Activated CD8-positive, alpha-beta T cell treated with anti-CD3 and anti-CD28 coated beads for 36 hours (primary cell): ENCODE measurements at regions of chr2 and their contacts with region 1.

Region 1: DNA sequence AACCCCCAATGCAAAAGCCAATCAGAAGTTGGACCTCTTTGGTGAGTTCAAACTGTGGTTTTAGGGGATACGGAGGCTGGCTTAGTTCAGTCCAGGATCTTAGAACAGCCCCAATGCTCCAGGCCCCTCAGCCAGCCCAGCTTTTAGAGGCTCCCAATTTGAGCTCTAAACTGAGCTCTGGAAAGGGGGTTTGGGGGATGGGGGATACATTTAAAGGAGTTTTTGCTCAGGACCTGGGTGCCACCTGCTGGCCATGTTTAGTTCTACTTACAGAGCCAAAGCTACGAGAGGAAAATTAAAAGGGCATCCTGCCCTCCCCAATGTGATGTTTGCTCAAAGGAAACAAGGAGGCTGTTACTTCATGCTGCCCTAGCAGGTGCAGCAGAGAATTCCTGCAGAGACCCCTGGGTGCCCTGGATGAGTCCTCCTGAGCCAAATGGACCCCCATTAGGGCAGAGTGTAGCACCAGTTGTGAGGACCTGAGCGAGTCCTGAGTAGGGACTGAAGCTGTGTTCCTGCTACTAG is 15.9 kb upstream of the TMEM214 start:
- DNase-seq: peak; percentile 75
- ATAC-seq: peak; percentile 77
- H3K4me3 Mint-ChIP-seq: no peak overlapping the region
- H3K27ac Mint-ChIP-seq: no peak overlapping the region
- H3K4me1 Mint-ChIP-seq: peaks cover 2% of the 10 kb centered on the region
- H3K27me3 Mint-ChIP-seq: no peaks in the 10 kb centered on the region
- CTCF ChIP-seq: peak; percentile 63

Region 2: DNA sequence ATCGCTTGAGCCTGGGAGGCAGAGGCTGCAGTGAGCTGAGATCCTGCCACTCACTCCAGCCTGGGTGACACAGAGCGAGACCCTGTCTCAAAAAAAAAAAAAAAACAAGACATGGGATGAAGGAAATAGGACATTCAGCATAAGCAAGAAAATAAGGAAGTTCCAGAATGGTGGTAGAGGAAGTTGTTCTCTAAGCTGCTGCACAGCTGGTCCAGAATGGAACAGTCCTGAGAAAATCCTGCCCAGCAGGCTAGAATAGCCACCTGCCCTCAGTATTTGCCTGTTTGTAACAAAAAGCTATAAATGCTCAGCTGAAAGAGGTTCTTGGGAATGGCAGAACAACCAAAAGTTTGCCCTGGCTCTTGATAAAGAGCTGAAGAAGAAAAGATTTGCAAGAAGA is 57.5 kb before region 1 on chr2:
- CTCF ChIA-PET with region 1: interaction called, 183 read pairs
- POLR2A ChIA-PET with region 1: interaction called, 5 read pairs
- intact Hi-C with region 1: loop called (anchors 2 kb)
- DNase-seq: no peak
- ATAC-seq: no peak
- H3K4me3 Mint-ChIP-seq: no peak overlapping the region
- H3K27ac Mint-ChIP-seq: no peak overlapping the region
- H3K4me1 Mint-ChIP-seq: no peaks in the 10 kb centered on the region
- H3K27me3 Mint-ChIP-seq: peaks cover 18% of the 10 kb centered on the region
- CTCF ChIP-seq: no peak

Region 3: GRCh38 chr2:26970244-26970920 is 46.5 kb before region 1 on chr2 and contains the start of gene MAPRE3:
- CTCF ChIA-PET with region 1: interaction called, 183 read pairs
- POLR2A ChIA-PET with region 1: no interaction called
- intact Hi-C with region 1: no loop called
- DNase-seq: peak; percentile 79
- ATAC-seq: peak; percentile 91
- H3K4me3 Mint-ChIP-seq: peak within 1 kb of the TSS; percentile 74
- H3K27ac Mint-ChIP-seq: no peak within 1 kb of the TSS
- H3K4me1 Mint-ChIP-seq: peaks cover 16% of the 10 kb centered on the region
- H3K27me3 Mint-ChIP-seq: peaks cover 16% of the 10 kb centered on the region
- CTCF ChIP-seq: no peak
- total RNA-seq, gene MAPRE3: 1.6 to 1.7 TPM

Region 4: DNA sequence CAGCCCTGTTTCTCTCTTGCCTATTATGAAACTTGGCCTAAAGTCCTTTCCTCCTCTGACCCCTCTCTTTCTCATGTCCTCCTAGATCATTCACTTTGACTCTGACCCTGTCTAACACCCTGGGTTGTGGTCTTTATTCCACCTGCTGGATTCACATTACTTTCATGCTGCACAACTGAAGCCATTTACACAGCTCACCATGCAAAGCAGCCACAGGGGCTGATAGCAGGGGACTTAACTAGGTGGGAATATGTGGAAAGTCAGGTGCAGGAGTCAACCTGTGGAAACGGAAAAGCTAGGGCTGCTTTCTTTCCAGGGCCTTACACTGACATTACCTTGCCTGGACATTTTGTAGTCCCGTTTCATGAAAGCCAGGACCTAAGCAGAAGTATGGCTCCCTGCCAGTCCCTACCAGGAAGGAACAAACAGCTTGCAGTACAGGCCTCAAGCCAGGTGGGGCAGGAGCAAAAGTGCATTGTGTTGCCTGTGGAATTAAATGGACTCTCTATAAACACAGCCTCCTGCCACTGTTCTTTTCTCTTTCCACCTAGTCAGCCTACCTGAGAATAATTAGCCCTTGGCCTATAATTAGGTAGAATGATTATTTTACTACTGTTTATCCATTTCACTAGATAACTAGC is 34.6 kb before region 1 on chr2:
- CTCF ChIA-PET with region 1: interaction called, 8 read pairs
- POLR2A ChIA-PET with region 1: no interaction called
- intact Hi-C with region 1: loop called (anchors 5 kb)
- DNase-seq: peak; percentile 42
- ATAC-seq: peak; percentile 76
- H3K4me3 Mint-ChIP-seq: no peak overlapping the region
- H3K27ac Mint-ChIP-seq: no peak overlapping the region
- H3K4me1 Mint-ChIP-seq: no peaks in the 10 kb centered on the region
- H3K27me3 Mint-ChIP-seq: no peaks in the 10 kb centered on the region
- CTCF ChIP-seq: no peak

Region 5: DNA sequence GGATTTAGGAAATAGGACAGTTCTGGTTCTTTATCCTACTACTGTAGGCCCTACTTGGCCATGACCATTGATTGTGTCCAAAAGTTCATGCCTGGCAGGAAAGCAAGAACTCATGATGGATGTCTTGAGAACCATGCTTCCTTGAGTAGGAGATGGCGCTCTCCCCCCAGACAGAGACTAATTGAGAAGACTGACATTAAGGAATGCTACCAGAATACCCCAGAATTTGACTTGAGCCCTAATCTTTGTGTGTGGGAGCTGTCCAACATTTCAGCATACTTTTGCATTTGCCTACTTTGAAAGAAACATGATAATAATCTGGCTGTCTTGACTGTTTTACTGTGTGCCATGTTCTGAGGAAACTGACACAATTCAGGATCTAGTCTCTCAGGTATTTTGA is 23.1 kb before region 1 on chr2:
- CTCF ChIA-PET with region 1: interaction called, 21 read pairs
- POLR2A ChIA-PET with region 1: no interaction called
- intact Hi-C with region 1: no loop called
- DNase-seq: no peak
- ATAC-seq: no peak
- H3K4me3 Mint-ChIP-seq: no peak overlapping the region
- H3K27ac Mint-ChIP-seq: no peak overlapping the region
- H3K4me1 Mint-ChIP-seq: no peaks in the 10 kb centered on the region
- H3K27me3 Mint-ChIP-seq: no peaks in the 10 kb centered on the region
- CTCF ChIP-seq: no peak

Region 6: GRCh38 chr2:27184115-27184514 is 167.3 kb after region 1 on chr2:
- CTCF ChIA-PET with region 1: no interaction called
- POLR2A ChIA-PET with region 1: no interaction called
- intact Hi-C with region 1: no loop called
- DNase-seq: no peak
- ATAC-seq: no peak
- H3K4me3 Mint-ChIP-seq: no peak overlapping the region
- H3K27ac Mint-ChIP-seq: no peak overlapping the region
- H3K4me1 Mint-ChIP-seq: no peaks in the 10 kb centered on the region
- H3K27me3 Mint-ChIP-seq: peaks cover 22% of the 10 kb centered on the region
- CTCF ChIP-seq: no peak

Region 7: GRCh38 chr2:27992787-27993401 is 976.0 kb after region 1 on chr2:
- CTCF ChIA-PET with region 1: no interaction called
- POLR2A ChIA-PET with region 1: no interaction called
- intact Hi-C with region 1: no loop called
- DNase-seq: no peak
- ATAC-seq: no peak
- H3K4me3 Mint-ChIP-seq: no peak overlapping the region
- H3K27ac Mint-ChIP-seq: no peak overlapping the region
- H3K4me1 Mint-ChIP-seq: peaks cover 30% of the 10 kb centered on the region
- H3K27me3 Mint-ChIP-seq: no peaks in the 10 kb centered on the region
- CTCF ChIP-seq: no peak